ENCODE measurements at regions of chr19 and their contacts with region 1.

Region 1: GRCh38 chr19:7293795-7294570 is at the start of gene INSR:
- DNase-seq: peak; percentile 75
- H3K4me3 Mint-ChIP-seq: peak within 1 kb of the TSS; percentile 73
- H3K27ac Mint-ChIP-seq: no peak within 1 kb of the TSS
- H3K4me1 Mint-ChIP-seq: peaks cover 9% of the 10 kb centered on the region
- H3K27me3 Mint-ChIP-seq: peaks cover 36% of the 10 kb centered on the region
- total RNA-seq, gene INSR: 3.7 to 3.9 TPM

Region 2: GRCh38 chr19:7197760-7198696 is 96.0 kb before region 1 on chr19:
- CTCF ChIA-PET with region 1: no interaction called
- intact Hi-C with region 1: loop called (anchors 1 kb)
- DNase-seq: peak; percentile 90
- H3K4me3 Mint-ChIP-seq: peak overlapping the region; percentile 77
- H3K27ac Mint-ChIP-seq: peak overlapping the region; percentile 84
- H3K4me1 Mint-ChIP-seq: peaks cover 7% of the 10 kb centered on the region
- H3K27me3 Mint-ChIP-seq: peaks cover 5% of the 10 kb centered on the region

Region 3: DNA sequence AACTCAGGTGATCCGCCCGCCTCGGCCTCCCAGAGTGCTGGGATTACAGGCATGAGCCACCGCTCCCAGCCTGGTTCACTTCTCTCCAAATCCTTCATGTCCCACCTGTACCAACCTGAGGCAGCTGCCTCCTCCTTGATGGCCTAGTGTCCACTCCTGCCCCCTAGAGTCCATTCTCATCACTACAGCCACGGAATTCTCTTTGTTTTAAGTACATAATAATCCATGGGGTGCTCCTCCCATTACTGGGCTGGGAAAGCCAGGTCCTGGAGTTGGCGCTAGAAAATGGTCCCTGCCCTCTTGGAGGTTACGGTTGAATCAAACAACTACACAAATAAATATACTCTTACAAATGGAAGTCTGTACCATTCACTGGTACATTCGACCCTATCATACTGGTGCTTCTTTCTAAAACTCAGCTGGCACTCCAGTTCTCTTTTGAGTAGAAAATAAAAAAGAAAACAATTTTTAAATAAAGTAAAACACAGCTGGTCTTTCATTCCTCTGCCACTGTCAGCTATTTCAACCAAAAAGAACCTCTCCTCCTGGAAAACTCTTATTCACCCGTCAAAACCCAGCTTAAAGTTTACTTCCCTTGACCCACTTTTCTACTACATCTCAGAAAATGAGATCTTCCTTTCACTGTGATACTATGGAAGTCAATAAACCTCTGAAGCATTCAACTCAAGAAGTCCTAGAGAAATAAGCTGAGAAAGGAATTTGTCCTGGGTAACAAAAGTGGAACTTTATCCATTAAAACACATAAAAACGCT is 32.3 kb after region 1 on chr19:
- CTCF ChIA-PET with region 1: no interaction called
- intact Hi-C with region 1: no loop called
- DNase-seq: peak; percentile 77
- H3K4me3 Mint-ChIP-seq: no peak overlapping the region
- H3K27ac Mint-ChIP-seq: no peak overlapping the region
- H3K4me1 Mint-ChIP-seq: no peaks in the 10 kb centered on the region
- H3K27me3 Mint-ChIP-seq: no peaks in the 10 kb centered on the region

Region 4: GRCh38 chr19:7515645-7516151 is 221.7 kb after region 1 on chr19 and contains the start of gene ZNF358:
- CTCF ChIA-PET with region 1: no interaction called
- intact Hi-C with region 1: no loop called
- DNase-seq: peak; percentile 29
- H3K4me3 Mint-ChIP-seq: peak within 1 kb of the TSS; percentile 69
- H3K27ac Mint-ChIP-seq: no peak within 1 kb of the TSS
- H3K4me1 Mint-ChIP-seq: peaks cover 13% of the 10 kb centered on the region
- H3K27me3 Mint-ChIP-seq: no peaks in the 10 kb centered on the region
- total RNA-seq, gene ZNF358: 3.7 to 3.9 TPM